ENCODE measurements at regions of chr14 and their contacts with region 1.

Region 1: GRCh38 chr14:22472935-22473854 is 115.8 kb downstream of the DAD1 start:
- DNase-seq: peak; percentile 43

Region 2: DNA sequence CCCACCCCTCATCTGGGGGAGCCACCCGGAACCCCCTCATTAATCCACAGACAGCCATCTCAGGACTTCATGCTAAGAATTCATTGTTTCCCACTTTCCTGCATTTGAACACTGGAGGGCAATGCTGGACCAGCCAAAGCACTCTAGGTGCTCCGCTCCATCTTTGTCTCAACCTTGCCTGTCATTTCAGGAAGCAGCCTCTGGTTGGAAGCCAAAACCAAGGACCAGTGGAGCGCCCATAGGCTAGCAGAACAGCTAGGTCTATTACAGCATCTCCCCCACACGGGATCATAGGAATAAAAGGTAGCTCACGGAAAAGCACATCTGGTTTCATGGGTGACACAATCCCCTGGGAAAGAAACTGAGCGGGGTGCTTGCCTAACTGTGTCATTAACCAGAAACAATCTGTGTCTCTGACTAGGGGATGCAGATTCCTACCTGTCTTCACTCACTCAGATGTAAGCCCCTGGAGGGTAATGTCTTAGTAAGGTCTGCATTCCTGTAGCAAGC is 81.2 kb before region 1 on chr14:
- CTCF ChIA-PET with region 1: interaction called, 27 read pairs
- POLR2A ChIA-PET with region 1: no interaction called
- DNase-seq: peak; percentile 68

Region 3: DNA sequence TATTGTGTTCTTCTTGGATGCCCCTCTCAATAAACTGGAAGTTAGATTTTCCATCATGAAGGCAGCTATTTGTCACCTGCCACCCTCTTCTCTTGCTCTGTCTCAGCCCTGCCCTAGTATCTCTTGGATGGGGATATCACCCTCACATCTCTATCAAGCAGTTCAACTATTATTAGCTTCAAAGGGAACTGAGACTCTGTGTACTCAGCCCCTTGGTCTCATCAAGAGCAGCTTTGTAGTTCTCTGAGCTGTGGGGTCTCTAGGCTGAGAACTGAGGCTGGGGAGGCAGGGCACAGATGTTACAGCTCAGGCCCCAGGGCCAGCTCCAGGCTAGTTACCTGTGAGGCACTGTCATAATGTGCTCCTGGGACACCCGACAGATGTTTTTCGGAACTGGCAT is 14.5 kb before region 1 on chr14:
- CTCF ChIA-PET with region 1: interaction called, 10 read pairs
- POLR2A ChIA-PET with region 1: no interaction called
- DNase-seq: no peak

Measured in HEK293T (cell line).